Activated CD8-positive, alpha-beta T cell treated with anti-CD3 and anti-CD28 coated beads for 36 hours (primary cell): ENCODE measurements at regions of chr15 and their contacts with region 1.

Region 1: GRCh38 chr15:67762610-67763368 is 62.5 kb upstream of the SKOR1 start:
- DNase-seq: peak; percentile 81
- ATAC-seq: peak; percentile 94
- H3K4me3 Mint-ChIP-seq: peak overlapping the region; percentile 8
- H3K27ac Mint-ChIP-seq: peak overlapping the region; percentile 78
- H3K4me1 Mint-ChIP-seq: peaks cover 67% of the 10 kb centered on the region
- H3K27me3 Mint-ChIP-seq: no peaks in the 10 kb centered on the region
- CTCF ChIP-seq: no peak

Region 2: DNA sequence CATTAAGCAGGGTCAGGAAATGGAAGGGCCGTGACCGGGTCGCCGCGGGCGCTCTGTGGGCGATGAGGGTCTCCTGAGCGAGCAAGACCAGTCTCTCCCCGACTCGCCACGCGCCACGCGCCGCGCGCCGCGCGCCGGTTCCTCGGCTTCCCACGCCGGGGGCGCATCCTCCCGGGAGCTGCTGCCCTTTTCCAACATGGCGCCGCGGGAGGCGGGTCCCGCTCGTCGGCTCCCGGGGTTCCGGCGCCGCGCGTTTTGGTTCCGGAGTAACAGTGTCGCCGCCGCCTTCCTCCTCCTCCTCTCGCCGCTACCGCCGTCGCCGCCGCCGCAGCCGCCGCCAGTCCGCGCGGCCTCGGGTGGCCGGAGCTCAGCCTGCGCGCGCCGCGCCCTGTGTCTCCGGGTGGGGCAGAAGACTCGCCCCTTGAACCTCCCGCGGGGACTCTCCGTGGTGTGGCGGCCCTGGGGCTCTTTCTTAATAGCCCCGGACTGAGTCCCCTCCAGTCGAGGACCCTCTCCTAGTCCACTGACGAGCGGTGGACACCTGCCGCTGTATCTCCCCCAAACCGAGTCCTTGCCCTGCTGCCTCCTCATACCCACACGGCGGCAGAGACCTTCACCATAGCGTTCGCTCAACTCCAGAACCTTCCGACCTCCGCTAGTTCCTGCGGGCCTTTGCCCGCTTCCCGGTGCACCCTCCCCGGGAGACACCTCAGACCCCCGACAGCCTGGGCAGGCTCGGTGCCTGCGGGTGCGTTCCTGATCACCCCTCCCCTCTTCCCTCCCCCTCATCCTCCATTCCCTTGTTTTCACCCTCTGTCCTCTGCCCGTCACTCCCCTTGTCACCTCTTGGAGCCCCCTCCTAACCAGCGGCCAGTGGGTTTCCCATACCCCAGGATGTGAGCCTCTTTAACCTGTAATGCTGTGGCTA is 220.1 kb before region 1 on chr15 and contains the start of gene MAP2K5:
- CTCF ChIA-PET with region 1: no interaction called
- POLR2A ChIA-PET with region 1: no interaction called
- intact Hi-C with region 1: loop called (anchors 10 kb)
- DNase-seq: peak; percentile 81
- ATAC-seq: peak; percentile 61
- H3K4me3 Mint-ChIP-seq: peak within 1 kb of the TSS; percentile 95
- H3K27ac Mint-ChIP-seq: peak within 1 kb of the TSS; percentile 96
- H3K4me1 Mint-ChIP-seq: peaks cover 54% of the 10 kb centered on the region
- H3K27me3 Mint-ChIP-seq: no peaks in the 10 kb centered on the region
- CTCF ChIP-seq: no peak
- total RNA-seq, gene MAP2K5: 19.0 to 21.1 TPM

Region 3: GRCh38 chr15:67792250-67792942 is 29.6 kb after region 1 on chr15:
- CTCF ChIA-PET with region 1: no interaction called
- POLR2A ChIA-PET with region 1: no interaction called
- intact Hi-C with region 1: no loop called
- DNase-seq: no peak
- ATAC-seq: no peak
- H3K4me3 Mint-ChIP-seq: no peak overlapping the region
- H3K27ac Mint-ChIP-seq: no peak overlapping the region
- H3K4me1 Mint-ChIP-seq: peaks cover 7% of the 10 kb centered on the region
- H3K27me3 Mint-ChIP-seq: no peaks in the 10 kb centered on the region
- CTCF ChIP-seq: no peak